ENCODE measurements at regions of chrX and their contacts with region 1.

Region 1: DNA sequence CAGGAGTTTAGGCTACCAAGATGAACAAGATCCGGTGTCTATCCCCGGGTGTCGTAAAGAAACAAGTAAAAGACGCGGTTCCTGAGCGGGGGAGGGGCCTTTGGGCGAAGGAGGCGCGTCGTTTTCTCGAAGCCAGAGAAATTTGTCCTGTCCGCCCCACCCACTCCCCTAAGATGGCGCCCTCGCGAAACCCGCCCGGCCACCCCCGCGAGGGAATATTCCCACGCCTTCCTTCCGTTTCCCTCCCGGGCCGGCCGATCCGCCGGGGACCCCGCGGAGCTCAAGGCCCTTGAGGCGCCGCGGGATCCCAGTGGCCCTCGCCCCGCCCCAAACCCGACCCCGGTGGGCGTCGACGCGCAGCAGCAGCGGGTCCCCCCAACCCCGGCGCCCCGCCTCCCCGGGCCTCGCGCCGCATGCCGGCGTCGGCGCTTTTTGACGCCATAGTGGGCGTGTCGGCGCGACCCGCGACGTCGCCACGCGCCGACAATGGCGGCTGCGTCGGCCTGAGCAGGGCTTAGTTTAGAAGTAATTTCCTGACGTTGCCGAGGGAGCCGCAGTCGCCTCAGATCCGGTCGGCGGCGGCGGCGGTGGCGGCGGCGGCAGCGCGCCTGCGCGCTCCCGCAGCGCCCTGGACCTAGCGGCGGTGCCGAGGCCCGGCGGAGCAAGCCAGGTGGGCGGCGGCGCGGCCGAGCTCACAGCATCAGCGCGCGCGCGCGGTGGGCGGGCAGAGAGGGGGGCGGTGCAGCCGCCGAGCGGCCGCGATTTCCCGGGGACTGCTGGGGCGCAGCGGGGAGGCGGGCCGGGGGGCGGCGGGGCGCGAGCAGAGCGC is at the start of gene HTATSF1:
- DNase-seq: peak; percentile 71 to 94 (median 82)
- ATAC-seq: peak; percentile 75
- H3K4me3 ChIP-seq: peak within 1 kb of the TSS; percentile 88
- H3K4me3 Mint-ChIP-seq: peak within 1 kb of the TSS; percentile 96
- H3K27ac ChIP-seq: peak within 1 kb of the TSS; percentile 83 to 85
- H3K27ac Mint-ChIP-seq: peak within 1 kb of the TSS; percentile 100
- H3K4me1 ChIP-seq: peaks cover 7% of the 10 kb centered on the region
- H3K4me1 Mint-ChIP-seq: peaks cover 26% of the 10 kb centered on the region
- H3K27me3 ChIP-seq: no peaks in the 10 kb centered on the region
- H3K27me3 Mint-ChIP-seq: no peaks in the 10 kb centered on the region
- CTCF ChIP-seq: no peak
- total RNA-seq, gene HTATSF1: 28.3 to 31.1 TPM

Region 2: DNA sequence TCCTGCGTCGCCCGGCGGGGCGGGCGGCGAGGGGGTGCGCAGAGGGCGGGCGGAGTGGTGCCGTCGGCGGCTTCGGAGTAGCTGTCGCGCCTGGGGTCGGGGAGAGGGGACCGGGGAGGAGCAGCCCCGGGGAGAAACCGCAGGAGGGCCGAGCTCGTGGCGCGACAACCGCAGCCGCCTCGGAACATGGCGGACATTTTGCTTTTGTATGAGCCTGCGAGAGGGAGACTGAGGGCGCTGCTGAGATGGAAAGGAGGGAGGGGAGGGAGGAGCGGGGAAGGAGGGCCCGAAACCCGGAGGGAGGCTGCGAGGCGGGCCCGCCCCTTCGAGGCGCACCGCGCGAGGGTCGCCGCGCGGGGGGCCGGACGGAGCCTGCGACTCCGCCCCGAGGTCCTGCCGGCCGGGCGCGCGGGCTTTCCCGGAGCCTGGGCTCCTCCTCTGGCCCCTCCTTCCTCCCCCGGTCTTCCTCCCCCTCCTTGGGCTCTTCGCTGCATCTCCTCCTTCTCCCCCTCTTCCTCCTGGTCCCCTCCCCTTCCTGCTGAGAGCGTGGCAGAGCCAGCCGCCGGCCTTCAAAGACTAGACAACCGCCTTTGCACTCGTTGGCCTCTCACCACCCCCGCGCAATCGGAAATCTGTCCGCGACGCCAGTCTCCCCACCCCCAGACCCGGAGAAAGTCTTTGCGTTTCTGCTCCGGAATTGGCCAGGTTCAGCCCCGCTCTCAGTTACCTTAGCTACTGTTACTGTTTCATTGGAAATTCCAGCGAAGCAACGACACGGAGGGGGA is 975.4 kb before region 1 on chrX:
- CTCF ChIA-PET with region 1: no interaction called
- POLR2A ChIA-PET with region 1: no interaction called
- intact Hi-C with region 1: loop called in 1 of 2 experiments (anchors 10 kb)
- DNase-seq: peak; percentile 62 to 96 (median 79)
- ATAC-seq: peak; percentile 67
- H3K4me3 ChIP-seq: peak overlapping the region; percentile 89
- H3K4me3 Mint-ChIP-seq: peak overlapping the region; percentile 98
- H3K27ac ChIP-seq: peak overlapping the region; percentile 78 to 85
- H3K27ac Mint-ChIP-seq: peak overlapping the region; percentile 95
- H3K4me1 ChIP-seq: peaks cover 12% of the 10 kb centered on the region
- H3K4me1 Mint-ChIP-seq: peaks cover 51% of the 10 kb centered on the region
- H3K27me3 ChIP-seq: no peaks in the 10 kb centered on the region
- H3K27me3 Mint-ChIP-seq: no peaks in the 10 kb centered on the region
- CTCF ChIP-seq: no peak

Region 3: DNA sequence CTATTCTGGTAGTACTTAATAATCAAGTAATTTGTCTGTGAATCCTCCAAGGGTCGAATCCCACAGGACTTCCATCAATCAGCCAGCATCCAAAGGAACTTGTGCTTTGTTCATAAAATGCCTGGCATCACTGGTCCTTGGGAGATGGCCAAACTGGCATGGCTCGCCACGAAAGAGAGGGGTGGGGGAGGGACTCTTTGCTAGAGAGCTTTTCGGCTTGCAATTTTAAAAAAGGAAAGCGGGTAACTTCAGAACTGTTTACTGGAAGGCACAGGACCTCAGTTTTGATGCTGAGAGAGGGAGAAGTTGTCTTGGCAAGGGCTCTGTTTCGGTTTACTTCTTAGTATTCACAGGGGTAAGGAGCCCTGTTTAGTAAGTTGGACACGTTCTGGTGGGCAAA is 429.0 kb before region 1 on chrX:
- CTCF ChIA-PET with region 1: no interaction called
- POLR2A ChIA-PET with region 1: no interaction called
- intact Hi-C with region 1: no loop called
- DNase-seq: no peak
- ATAC-seq: no peak
- H3K4me3 ChIP-seq: no peak overlapping the region
- H3K4me3 Mint-ChIP-seq: no peak overlapping the region
- H3K27ac ChIP-seq: no peak overlapping the region
- H3K27ac Mint-ChIP-seq: no peak overlapping the region
- H3K4me1 ChIP-seq: peaks cover 30% of the 10 kb centered on the region
- H3K4me1 Mint-ChIP-seq: peaks cover 39% of the 10 kb centered on the region
- H3K27me3 ChIP-seq: no peaks in the 10 kb centered on the region
- H3K27me3 Mint-ChIP-seq: no peaks in the 10 kb centered on the region
- CTCF ChIP-seq: no peak

Region 4: GRCh38 chrX:136251041-136251991 is 245.7 kb before region 1 on chrX and contains the start of gene MAP7D3:
- CTCF ChIA-PET with region 1: no interaction called
- POLR2A ChIA-PET with region 1: no interaction called
- intact Hi-C with region 1: loop called in 1 of 2 experiments (anchors 10 kb)
- DNase-seq: peak; percentile 40 to 89 (median 61)
- ATAC-seq: peak; percentile 88
- H3K4me3 ChIP-seq: peak within 1 kb of the TSS; percentile 58
- H3K4me3 Mint-ChIP-seq: peak within 1 kb of the TSS; percentile 95
- H3K27ac ChIP-seq: peak within 1 kb of the TSS in 1 of 2 donors; percentile 29
- H3K27ac Mint-ChIP-seq: peak within 1 kb of the TSS; percentile 84
- H3K4me1 ChIP-seq: peaks cover 8% of the 10 kb centered on the region
- H3K4me1 Mint-ChIP-seq: peaks cover 9% of the 10 kb centered on the region
- H3K27me3 ChIP-seq: no peaks in the 10 kb centered on the region
- H3K27me3 Mint-ChIP-seq: no peaks in the 10 kb centered on the region
- CTCF ChIP-seq: no peak
- total RNA-seq, gene MAP7D3: 3.2 to 3.7 TPM

Region 5: GRCh38 chrX:136376713-136377112 is 120.3 kb before region 1 on chrX:
- CTCF ChIA-PET with region 1: no interaction called
- POLR2A ChIA-PET with region 1: no interaction called
- intact Hi-C with region 1: no loop called
- DNase-seq: no peak
- ATAC-seq: no peak
- H3K4me3 ChIP-seq: no peak overlapping the region
- H3K4me3 Mint-ChIP-seq: no peak overlapping the region
- H3K27ac ChIP-seq: no peak overlapping the region
- H3K27ac Mint-ChIP-seq: no peak overlapping the region
- H3K4me1 ChIP-seq: no peaks in the 10 kb centered on the region
- H3K4me1 Mint-ChIP-seq: no peaks in the 10 kb centered on the region
- H3K27me3 ChIP-seq: no peaks in the 10 kb centered on the region
- H3K27me3 Mint-ChIP-seq: peaks cover 6% of the 10 kb centered on the region
- CTCF ChIP-seq: no peak

Region 6: DNA sequence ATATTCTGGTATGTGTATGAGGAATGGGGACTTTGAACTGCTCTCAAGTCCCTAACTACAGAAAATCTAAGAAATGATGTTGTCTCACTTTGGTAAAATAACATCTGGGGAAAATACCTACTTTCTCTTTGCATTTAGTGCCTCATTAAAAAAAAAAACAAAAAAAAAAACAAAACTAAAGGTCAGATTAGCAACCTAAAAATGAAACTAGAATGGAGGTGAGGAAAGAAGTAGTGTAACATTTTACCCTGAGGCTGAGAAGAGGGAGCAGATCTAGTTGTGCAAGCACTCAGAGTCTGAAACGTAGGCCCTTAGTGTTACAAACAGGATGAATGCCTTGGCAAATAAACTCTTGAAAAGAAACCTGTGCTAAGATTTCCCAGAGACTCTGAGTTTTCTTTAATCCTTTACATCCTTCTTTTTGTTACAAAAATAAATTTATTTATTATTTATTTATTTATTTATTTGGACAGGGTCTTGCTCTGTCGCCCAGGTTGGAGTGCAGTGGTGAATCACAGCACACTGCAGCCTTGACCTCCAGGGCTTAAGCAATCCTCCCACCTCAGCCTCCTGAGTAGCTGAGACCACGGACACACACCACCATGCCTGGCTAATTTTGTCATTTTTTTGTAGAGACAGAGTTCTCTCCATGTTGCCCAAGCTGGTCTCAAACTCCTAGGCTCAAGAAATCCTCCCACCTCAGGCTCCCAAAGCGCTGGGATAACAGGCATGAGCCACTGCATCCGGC is 91.2 kb after region 1 on chrX:
- CTCF ChIA-PET with region 1: no interaction called
- POLR2A ChIA-PET with region 1: interaction called, 10 read pairs
- intact Hi-C with region 1: loop called in 1 of 2 experiments (anchors 5 kb)
- DNase-seq: peak in 3 of 14 experiments; percentile 59 to 66 (median 63)
- ATAC-seq: peak; percentile 15
- H3K4me3 ChIP-seq: no peak overlapping the region
- H3K4me3 Mint-ChIP-seq: peak overlapping the region; percentile 7
- H3K27ac ChIP-seq: peak overlapping the region; percentile 59 to 72
- H3K27ac Mint-ChIP-seq: peak overlapping the region; percentile 92
- H3K4me1 ChIP-seq: peaks cover 49% of the 10 kb centered on the region
- H3K4me1 Mint-ChIP-seq: peaks cover 44% of the 10 kb centered on the region
- H3K27me3 ChIP-seq: no peaks in the 10 kb centered on the region
- H3K27me3 Mint-ChIP-seq: no peaks in the 10 kb centered on the region
- CTCF ChIP-seq: no peak

Region 7: DNA sequence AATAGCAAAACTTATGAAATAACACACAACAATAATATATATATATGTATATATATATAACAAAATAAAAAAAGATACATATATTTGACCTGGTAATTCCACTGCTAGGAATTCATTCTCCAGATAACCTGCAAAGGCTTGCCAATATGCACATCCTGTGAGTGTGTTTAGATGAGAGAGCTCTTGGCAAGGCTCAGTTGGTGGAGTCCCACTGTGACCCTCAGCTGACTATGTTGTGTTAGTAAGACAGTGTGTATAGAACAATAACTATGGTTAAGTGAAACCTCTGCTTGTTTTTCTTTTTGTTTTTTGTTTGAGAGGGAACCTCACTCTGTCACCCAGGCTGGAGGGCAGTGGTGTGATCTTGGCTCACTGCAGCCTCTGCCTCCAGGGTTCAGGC is 423.0 kb after region 1 on chrX:
- CTCF ChIA-PET with region 1: no interaction called
- POLR2A ChIA-PET with region 1: no interaction called
- intact Hi-C with region 1: loop called in 1 of 2 experiments (anchors 10 kb)
- DNase-seq: no peak
- ATAC-seq: no peak
- H3K4me3 ChIP-seq: no peak overlapping the region
- H3K4me3 Mint-ChIP-seq: no peak overlapping the region
- H3K27ac ChIP-seq: no peak overlapping the region
- H3K27ac Mint-ChIP-seq: no peak overlapping the region
- H3K4me1 ChIP-seq: peaks cover 2% of the 10 kb centered on the region
- H3K4me1 Mint-ChIP-seq: peaks cover 3% of the 10 kb centered on the region
- H3K27me3 ChIP-seq: no peaks in the 10 kb centered on the region
- H3K27me3 Mint-ChIP-seq: no peaks in the 10 kb centered on the region
- CTCF ChIP-seq: no peak

Measured in CD4-positive, alpha-beta T cell (primary cell).